ENCODE measurements at regions of chr7 and their contacts with region 1.

Region 1: DNA sequence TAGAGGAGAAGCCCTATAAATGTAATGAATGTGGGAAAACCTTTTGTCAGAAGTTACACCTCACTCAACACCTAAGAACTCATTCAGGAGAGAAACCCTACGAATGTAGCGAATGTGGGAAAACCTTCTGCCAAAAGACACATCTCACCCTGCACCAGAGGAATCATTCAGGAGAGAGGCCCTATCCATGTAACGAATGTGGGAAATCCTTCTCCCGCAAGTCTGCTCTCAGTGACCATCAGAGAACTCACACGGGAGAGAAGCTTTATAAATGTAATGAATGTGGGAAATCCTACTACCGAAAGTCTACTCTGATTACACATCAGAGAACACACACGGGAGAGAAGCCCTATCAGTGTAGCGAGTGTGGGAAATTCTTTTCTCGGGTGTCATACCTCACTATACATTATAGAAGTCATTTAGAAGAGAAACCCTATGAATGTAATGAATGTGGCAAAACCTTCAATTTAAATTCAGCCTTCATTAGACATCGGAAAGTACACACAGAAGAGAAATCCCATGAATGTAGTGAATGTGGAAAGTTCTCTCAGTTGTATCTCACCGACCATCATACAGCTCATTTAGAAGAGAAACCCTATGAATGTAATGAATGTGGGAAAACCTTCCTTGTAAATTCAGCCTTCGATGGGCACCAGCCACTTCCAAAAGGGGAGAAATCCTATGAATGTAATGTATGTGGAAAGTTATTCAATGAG is 18.9 kb downstream of the RBAK start:
- DNase-seq: no peak
- ATAC-seq: no peak
- H3K4me3 Mint-ChIP-seq: peak overlapping the region; percentile 7
- H3K27ac Mint-ChIP-seq: no peak overlapping the region
- H3K4me1 Mint-ChIP-seq: no peaks in the 10 kb centered on the region
- H3K27me3 Mint-ChIP-seq: no peaks in the 10 kb centered on the region

Region 2: GRCh38 chr7:4297165-4297917 is 767.2 kb before region 1 on chr7:
- CTCF ChIA-PET with region 1: no interaction called
- POLR2A ChIA-PET with region 1: no interaction called
- intact Hi-C with region 1: no loop called
- DNase-seq: no peak
- ATAC-seq: no peak
- H3K4me3 Mint-ChIP-seq: no peak overlapping the region
- H3K27ac Mint-ChIP-seq: no peak overlapping the region
- H3K4me1 Mint-ChIP-seq: no peaks in the 10 kb centered on the region
- H3K27me3 Mint-ChIP-seq: peaks cover 7% of the 10 kb centered on the region

Region 3: DNA sequence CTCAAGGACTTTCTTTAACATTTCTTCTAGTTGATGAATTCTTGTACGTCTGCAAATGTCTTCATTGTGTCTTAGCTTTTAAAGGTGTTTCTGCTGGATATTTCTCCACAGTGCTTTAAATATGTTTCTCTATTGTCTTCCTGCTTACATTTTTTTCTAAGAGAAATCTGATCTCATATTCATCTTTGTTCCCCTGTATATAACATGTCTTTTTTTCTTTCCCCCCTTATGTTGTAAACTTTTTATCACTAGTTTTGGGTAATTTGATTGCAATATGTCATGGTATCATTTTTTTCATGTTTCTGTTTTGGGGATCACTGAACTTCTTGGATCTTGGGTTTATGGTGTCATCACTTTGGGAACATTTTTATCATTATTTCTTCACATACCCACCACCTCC is 11.4 kb before region 1 on chr7:
- CTCF ChIA-PET with region 1: no interaction called
- POLR2A ChIA-PET with region 1: no interaction called
- intact Hi-C with region 1: loop called in 1 of 2 experiments (anchors 2 kb)
- DNase-seq: no peak
- ATAC-seq: no peak
- H3K4me3 Mint-ChIP-seq: no peak overlapping the region
- H3K27ac Mint-ChIP-seq: no peak overlapping the region
- H3K4me1 Mint-ChIP-seq: peaks cover 16% of the 10 kb centered on the region
- H3K27me3 Mint-ChIP-seq: no peaks in the 10 kb centered on the region